ENCODE measurements at regions of chr2 and their contacts with region 1.

Region 1: DNA sequence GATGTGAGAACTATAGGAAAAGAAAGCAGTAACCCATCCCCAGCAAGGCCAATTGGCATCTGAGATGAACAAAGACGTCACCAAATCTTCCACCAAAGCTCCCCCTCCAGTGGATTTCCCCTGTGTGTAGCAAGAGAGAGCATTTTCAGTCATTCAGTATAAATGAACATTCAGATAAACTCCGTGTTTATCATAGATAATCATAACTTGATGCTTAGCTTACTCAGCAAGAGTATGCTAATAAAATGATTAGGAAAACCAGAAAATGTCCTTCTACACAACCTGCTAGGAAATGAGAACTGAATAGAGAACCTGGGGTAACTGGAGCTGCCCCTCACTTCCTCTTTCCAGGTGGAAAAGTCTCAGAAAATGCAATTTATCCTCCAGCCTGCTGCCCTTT is 198.0 kb upstream of the CCDC150 start:
- DNase-seq: no peak
- ATAC-seq: no peak
- H3K4me3 ChIP-seq: no peak overlapping the region
- H3K27ac ChIP-seq: no peak overlapping the region
- H3K4me1 ChIP-seq: peaks cover 0 to 19% (median 5%) of the 10 kb centered on the region in 9 donors
- H3K27me3 ChIP-seq: no peaks in the 10 kb centered on the region
- CTCF ChIP-seq: no peak

Region 2: DNA sequence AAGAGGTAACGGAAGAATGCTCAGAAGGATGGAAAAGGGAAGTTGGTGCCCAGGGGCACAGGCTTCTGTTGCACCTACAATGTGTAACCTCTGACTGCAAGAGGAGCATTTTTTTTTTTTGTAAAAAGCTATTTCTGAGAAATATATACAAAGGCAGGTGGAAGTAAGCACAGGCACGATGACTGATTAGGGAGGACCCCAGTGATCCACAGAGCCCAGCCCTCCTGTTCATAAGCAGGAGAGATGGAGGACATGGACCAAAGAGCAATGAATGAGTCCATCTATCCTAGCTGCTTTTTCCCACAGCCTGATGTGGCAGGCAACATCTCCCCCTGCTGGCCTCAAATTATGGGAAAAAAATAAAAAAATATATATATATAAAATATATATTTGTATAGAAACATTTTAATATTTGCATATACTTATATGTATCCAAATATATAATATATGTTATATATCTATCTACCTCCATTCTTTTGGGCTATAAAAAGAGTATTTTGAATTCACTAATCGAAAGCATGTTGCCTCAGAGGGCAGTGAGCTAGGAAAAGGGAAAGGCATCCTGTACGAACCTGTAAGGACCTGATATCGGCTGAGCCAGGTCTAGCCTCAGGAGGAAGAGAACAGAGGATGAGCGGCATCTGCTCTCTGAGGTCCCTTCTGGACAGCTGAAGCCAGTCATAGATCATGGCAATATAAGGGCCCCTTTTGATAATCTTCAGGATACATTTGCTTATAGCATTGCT is 104.1 kb before region 1 on chr2:
- intact Hi-C with region 1: loop called in 1 of 10 experiments (anchors 10 kb)
- DNase-seq: no peak
- ATAC-seq: no peak
- H3K4me3 ChIP-seq: no peak overlapping the region
- H3K27ac ChIP-seq: peak overlapping the region in 1 of 10 donors; percentile 8
- H3K4me1 ChIP-seq: peaks cover 0 to 84% (median 22%) of the 10 kb centered on the region in 9 donors
- H3K27me3 ChIP-seq: no peaks in the 10 kb centered on the region
- CTCF ChIP-seq: peak; percentile 10 to 64 (median 56)

Region 3: DNA sequence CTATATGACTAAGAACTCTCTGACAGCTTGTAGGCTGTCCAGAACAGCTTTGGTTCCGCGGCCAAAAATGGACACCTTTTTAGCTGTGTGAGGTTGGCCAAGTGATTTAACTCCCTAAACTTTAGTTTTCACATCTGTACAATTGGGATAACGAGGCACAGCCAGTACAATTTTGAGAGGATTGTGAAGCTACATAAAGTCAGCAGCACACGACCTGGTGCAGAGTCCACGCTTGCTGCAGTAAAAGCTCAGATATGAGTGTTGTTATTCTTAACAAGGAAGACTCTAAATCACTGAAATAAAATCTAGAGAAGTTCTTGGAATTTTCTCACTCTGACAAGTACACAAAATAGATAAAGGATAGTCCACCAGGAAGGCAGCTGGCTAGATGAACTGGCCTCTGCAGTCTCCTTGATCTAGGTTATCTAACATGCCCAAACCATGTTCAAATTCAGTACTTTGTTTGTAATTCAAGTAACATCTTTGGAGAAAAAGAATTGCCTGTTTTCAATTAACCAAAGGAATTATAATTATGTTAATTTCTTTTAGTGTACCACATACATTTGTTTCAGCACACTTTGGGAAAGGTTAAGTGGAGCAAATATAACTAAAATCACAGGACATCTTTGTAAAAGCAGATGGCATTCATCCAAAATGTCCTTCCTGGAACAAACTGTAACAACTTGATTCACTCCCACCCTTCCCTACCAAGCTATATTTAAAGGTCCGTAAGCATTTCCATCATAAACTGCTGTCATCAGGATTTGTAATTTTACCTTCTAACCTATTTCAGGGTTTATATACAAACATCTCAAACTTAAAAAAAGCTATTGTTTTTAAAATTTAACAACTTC is 68.5 kb before region 1 on chr2:
- intact Hi-C with region 1: no loop called
- DNase-seq: no peak
- ATAC-seq: peak; percentile 33 to 91 (median 80)
- H3K4me3 ChIP-seq: peak overlapping the region in 2 of 10 donors; percentile 13 to 17
- H3K27ac ChIP-seq: peak overlapping the region; percentile 23 to 80 (median 58)
- H3K4me1 ChIP-seq: peaks cover 0 to 33% (median 22%) of the 10 kb centered on the region in 9 donors
- H3K27me3 ChIP-seq: no peaks in the 10 kb centered on the region
- CTCF ChIP-seq: no peak